Right ventricle myocardium superior (tissue), 1 donor: ENCODE measurements at regions of chr11 and their contacts with region 1.

Region 1: DNA sequence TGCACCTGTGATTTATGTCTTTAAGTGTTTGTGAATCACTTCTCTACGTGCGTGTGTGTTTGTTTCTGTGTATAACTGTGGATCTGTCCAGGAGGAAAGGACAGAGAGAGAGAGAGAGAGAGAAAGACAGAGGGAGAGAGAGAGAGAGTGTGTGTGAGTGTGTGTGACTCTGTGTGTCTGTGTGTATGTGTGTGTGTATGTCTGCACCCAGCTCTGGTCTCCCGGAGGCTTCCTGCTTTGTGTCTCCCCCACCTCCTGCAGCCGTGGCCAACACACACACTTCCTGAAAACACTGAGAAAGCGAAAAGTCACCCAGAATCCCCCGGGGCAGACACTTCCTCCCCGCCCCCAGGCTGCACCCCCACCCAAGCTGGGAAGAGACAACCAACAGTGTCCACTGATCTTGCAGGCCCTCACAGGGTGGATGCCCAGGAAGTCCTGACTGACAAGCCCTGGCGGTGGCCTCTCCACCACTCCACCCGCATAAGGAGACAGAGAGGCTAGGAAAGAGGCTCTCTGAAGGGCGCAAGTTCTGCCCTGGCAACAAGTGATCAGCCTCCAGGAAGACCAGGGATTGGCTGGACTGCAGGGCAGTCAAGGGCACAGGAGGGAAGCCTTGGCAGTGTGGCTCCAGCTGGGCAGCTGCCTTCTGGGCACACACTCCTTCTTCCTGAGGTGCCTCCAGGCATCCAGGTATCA is 30.0 kb downstream of the ARAP1 start:
- DNase-seq: peak; percentile 90
- ATAC-seq: peak; percentile 78

Region 2: DNA sequence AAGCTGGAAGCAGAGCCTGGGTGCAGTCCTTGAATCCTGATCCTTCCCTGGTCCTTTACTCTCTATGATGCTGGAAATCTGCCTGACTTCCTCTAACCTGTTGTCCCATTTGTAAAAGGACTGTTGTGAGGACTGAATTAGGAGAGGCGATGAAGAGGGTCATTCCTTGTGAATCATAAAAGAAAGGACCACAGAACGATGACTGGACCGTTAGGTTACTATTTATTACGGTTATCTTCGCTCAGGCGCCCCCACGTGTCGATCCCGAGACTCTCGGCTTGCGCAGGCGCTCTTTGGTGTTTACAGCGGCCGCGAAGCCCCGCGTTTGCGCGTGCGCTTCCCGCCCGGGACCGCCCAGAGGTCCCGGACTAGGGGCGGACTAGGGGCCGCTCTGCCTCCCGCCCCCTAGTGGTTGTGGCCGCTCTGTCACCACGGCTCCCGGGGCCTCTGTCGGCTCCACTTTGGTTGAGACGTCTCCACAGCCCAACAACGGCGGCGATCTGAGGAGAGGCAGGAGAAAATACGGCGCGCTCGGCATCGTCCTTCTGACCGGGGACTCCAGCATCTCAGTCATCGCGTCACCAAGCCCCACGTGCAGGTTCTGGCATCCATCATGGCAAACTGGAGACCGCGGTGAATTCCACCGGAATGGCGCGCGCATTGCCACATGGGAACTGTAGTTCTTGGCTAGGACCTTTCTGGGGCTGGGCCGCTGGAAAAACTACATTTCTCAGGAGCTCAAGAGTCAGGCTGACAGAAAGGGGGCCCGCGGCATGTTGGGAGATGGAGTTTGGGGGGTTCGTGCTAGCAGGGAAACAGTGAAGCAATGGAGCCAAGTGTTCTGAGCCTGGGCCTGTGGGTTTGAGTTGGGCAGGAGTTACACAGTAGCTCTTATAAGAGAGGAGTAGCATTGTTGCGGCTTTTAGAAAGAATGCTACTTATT is 71.5 kb after region 1 on chr11 and contains the start of gene STARD10:
- intact Hi-C with region 1: loop called (anchors 5 kb)
- DNase-seq: peak; percentile 98
- ATAC-seq: peak; percentile 97
- total RNA-seq, gene STARD10: 117 TPM

Region 3: GRCh38 chr11:73177778-73178577 is 455.8 kb after region 1 on chr11:
- intact Hi-C with region 1: loop called (anchors 10 kb)
- DNase-seq: peak; percentile 91
- ATAC-seq: peak; percentile 69

Region 4: GRCh38 chr11:73295231-73295995 is 573.2 kb after region 1 on chr11:
- intact Hi-C with region 1: loop called (anchors 10 kb)
- DNase-seq: peak; percentile 74
- ATAC-seq: peak; percentile 38